ENCODE measurements at regions of chr12 and their contacts with region 1.

Region 1: DNA sequence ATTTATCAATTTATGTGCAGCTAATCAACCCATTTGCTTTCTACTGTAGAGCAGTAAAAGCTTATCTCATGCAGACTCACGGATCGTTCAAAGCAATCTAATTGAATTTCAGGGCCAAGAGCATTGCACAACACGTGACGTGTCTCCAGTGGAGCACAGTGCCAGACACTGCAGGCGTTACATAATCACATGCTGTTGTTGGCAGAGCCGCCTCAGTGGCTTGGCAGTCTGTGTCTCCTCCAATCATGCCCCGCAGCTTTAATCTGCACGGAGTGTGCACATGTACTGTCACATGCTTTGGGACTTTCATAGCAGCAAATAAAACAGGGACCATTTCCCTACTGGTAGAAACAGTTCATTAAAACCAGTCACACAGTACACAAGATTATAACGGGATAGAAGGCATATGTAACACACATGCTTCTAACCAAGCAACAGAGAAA is 309.3 kb downstream of the ITPR2 start:
- DNase-seq: peak; percentile 92
- H3K4me3 ChIP-seq: no peak overlapping the region
- H3K27ac ChIP-seq: no peak overlapping the region
- H3K4me1 ChIP-seq: peaks cover 8% of the 10 kb centered on the region
- H3K27me3 ChIP-seq: no peaks in the 10 kb centered on the region
- CTCF ChIP-seq: no peak

Region 2: DNA sequence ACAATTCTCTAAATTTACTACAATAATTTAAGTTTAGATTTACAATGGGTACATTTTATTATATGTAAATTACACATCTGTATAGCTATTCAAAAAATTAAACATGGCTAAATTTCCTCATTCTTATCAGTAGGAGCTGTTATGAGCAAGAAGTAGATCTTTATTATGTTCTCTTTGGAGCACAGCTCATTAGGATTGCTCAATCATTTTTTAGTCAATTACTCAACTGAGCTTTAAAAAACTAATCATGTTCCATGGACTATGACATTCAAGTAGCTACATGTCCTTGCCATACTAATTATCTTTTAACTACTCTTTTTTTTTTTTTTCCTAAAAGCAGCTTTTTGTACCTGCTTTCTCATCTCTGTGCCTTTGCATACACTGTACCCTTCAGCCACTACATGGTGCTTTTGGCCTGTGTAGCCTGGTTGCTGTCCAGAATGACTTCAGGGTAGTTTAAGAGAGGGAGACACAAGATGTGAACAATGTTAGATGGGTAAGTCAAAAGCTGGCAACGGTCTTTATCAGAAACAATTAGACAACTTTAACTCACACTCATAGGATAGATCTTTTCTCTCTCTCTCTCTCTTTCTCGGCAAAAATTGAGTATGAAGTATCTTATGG is 259.4 kb before region 1 on chr12:
- CTCF ChIA-PET with region 1: interaction called, 10 read pairs
- dilution Hi-C with region 1: no loop called
- in situ Hi-C with region 1: no loop called
- intact Hi-C with region 1: no loop called
- DNase-seq: peak; percentile 80
- H3K4me3 ChIP-seq: no peak overlapping the region
- H3K27ac ChIP-seq: no peak overlapping the region
- H3K4me1 ChIP-seq: peaks cover 26% of the 10 kb centered on the region
- H3K27me3 ChIP-seq: no peaks in the 10 kb centered on the region
- CTCF ChIP-seq: peak; percentile 23 to 38

Region 3: GRCh38 chr12:26493656-26494055 is 30.1 kb before region 1 on chr12:
- CTCF ChIA-PET with region 1: no interaction called
- dilution Hi-C with region 1: no loop called
- in situ Hi-C with region 1: no loop called
- intact Hi-C with region 1: loop called (anchors 2 kb)
- DNase-seq: peak; percentile 68
- H3K4me3 ChIP-seq: no peak overlapping the region
- H3K27ac ChIP-seq: peak overlapping the region; percentile 41
- H3K4me1 ChIP-seq: peaks cover 24% of the 10 kb centered on the region
- H3K27me3 ChIP-seq: no peaks in the 10 kb centered on the region
- CTCF ChIP-seq: no peak

Region 4: GRCh38 chr12:26651566-26652188 is 127.9 kb after region 1 on chr12:
- CTCF ChIA-PET with region 1: no interaction called
- dilution Hi-C with region 1: no loop called
- in situ Hi-C with region 1: no loop called
- intact Hi-C with region 1: loop called (anchors 1 kb)
- DNase-seq: peak; percentile 67
- H3K4me3 ChIP-seq: no peak overlapping the region
- H3K27ac ChIP-seq: no peak overlapping the region
- H3K4me1 ChIP-seq: peaks cover 14% of the 10 kb centered on the region
- H3K27me3 ChIP-seq: no peaks in the 10 kb centered on the region
- CTCF ChIP-seq: peak; percentile 72 to 84